Dendritic cell treated with granulocyte-macrophage colony-stimulating factor and Interleukin-4, amounts not matched to agents 40 ng/mL and 50 ng/mL, for 4 days (primary cell): ENCODE measurements at regions of chr4 and their contacts with region 1.

Region 1: GRCh38 chr4:54233277-54233696 is 4.2 kb downstream of the PDGFRA start:
- H3K4me3 Mint-ChIP-seq: peak overlapping the region; percentile 77
- H3K27ac Mint-ChIP-seq: peak overlapping the region; percentile 38
- H3K4me1 Mint-ChIP-seq: peaks cover 52% of the 10 kb centered on the region
- H3K27me3 Mint-ChIP-seq: peaks cover 75% of the 10 kb centered on the region

Region 2: DNA sequence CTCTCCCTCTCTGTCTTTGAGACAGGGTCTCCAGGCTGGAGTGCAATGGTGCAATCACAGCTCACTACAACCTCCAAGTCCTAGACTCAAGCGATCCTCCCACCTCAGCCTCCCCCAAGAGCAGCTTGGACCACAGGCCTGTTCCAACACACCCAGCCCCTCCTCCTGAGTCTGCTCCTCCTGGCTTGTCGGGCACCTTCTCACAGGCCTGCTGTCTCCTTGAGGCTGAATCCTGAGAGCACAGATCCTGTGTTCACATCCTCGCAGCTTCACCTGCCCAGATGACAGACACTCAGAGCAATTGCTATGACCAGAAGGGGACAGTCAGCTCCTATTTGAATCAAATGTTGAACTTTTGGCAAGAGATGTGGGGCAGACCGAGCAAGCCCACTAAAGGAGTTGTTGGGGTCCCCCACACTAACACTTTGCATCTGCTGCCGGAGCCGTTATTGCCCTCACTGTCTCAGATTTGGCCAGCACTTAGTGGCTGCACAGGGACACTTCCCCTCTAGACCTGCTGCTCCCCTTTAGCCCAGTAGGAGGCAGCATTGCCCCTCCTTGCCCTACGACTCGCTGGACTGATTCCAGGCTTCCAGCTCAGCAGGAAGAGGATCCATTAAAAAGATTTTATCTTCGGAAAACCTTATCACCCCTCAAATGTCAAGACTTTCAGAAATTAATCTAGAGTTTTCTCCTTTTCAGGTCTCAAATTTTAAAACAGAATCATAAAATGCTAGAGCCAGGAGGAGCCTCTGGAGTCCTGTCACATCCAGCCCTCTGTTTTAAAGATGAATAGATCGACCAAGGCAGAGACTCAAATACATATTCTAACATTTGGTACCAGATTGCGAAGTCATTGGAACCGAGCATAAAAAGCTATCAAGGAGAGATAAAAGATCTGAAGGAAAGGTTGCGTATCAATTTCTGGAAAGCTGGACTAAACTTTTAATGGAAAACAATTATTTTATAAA is 1687.9 kb before region 1 on chr4:
- intact Hi-C with region 1: loop called (anchors 5 kb)
- H3K4me3 Mint-ChIP-seq: no peak overlapping the region
- H3K27ac Mint-ChIP-seq: no peak overlapping the region
- H3K4me1 Mint-ChIP-seq: no peaks in the 10 kb centered on the region
- H3K27me3 Mint-ChIP-seq: no peaks in the 10 kb centered on the region

Region 3: DNA sequence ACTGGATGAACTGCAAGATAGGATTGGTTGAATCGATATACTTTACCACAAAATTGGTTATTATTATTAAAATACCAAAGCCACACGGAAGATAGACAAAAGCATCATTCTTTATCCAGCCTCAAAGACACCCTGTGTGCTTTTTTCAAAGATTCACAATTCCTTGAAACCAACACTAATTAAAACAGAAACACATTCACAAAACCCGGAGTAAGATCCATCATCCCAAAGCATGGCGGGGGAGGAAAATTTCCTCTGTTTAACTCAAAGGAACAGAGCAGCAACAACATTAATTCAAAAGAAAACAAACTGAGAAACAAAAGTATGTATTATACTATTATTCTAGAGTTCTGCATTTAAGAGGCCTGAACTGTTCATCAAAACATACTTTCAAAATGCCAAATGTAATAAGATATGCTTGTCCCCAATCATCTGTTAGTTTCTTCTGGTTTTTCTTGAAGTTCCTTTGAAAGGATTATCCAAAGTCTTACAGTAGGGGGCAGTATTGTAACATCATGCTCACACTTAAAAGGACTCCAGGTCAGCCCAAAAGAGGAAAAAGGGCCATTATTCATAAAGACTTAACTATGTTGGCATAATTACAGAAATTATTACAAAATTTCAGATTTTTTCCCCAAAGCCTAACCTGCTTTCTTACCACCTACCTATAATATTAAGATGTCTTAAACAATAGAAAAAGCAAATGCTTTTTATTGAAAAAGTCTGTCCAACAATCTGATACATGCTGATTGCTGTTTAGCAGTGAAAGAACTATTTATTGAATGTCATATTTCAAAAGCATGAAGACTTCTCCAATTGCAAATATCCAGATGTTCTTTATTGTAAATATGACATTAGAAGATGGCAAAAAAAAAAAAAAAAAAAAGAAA is 1036.2 kb before region 1 on chr4:
- intact Hi-C with region 1: loop called (anchors 1 kb)
- H3K4me3 Mint-ChIP-seq: no peak overlapping the region
- H3K27ac Mint-ChIP-seq: no peak overlapping the region
- H3K4me1 Mint-ChIP-seq: peaks cover under 1% of the 10 kb centered on the region
- H3K27me3 Mint-ChIP-seq: no peaks in the 10 kb centered on the region

Region 4: DNA sequence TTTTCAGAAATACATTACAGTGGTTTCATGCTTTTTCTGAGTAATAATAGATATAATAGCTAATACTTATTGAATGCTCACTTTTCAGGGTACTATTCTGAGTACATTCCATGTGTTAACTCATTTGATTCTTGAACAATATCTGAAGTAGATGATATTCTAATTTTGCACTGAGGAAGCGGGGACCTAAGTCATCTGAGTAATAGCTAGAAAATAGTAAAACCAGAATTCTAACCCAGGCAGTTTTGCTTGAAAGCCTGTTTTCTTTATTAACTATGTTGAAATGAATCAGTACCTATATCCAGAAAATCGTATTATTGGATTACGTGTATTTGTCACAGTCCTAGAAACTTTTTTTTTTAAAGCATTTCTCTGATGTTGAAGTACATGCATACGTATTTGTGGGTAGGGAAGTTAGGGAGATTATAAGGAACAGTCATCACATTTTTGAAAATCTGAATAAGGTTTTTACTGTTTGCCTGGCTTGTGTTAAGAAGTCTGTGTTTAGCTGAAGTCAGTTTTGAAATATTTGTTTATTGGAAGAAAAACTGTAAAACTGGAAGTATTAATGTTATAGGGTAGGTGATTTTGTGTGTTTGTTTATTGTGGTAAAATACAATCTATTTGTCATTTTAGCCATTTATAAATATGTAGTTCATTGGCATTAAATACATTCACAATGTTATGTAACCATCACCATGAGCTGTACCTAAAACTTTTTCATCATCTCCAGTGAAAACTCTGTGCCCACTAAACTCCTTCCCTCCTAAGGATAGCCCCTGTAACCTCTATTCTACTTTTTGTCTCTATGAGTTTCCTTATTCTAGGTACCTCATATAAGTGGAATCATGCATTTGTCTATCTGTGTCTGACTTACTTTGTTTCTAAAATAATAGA is 800.5 kb before region 1 on chr4:
- intact Hi-C with region 1: loop called (anchors 10 kb)
- H3K4me3 Mint-ChIP-seq: no peak overlapping the region
- H3K27ac Mint-ChIP-seq: no peak overlapping the region
- H3K4me1 Mint-ChIP-seq: no peaks in the 10 kb centered on the region
- H3K27me3 Mint-ChIP-seq: no peaks in the 10 kb centered on the region

Region 5: GRCh38 chr4:53706422-53707032 is 526.8 kb before region 1 on chr4:
- intact Hi-C with region 1: loop called (anchors 5 kb)
- H3K4me3 Mint-ChIP-seq: no peak overlapping the region
- H3K27ac Mint-ChIP-seq: no peak overlapping the region
- H3K4me1 Mint-ChIP-seq: peaks cover 25% of the 10 kb centered on the region
- H3K27me3 Mint-ChIP-seq: no peaks in the 10 kb centered on the region

Region 6: GRCh38 chr4:54255876-54256275 is 22.6 kb after region 1 on chr4:
- intact Hi-C with region 1: no loop called
- H3K4me3 Mint-ChIP-seq: no peak overlapping the region
- H3K27ac Mint-ChIP-seq: no peak overlapping the region
- H3K4me1 Mint-ChIP-seq: no peaks in the 10 kb centered on the region
- H3K27me3 Mint-ChIP-seq: no peaks in the 10 kb centered on the region